IMR-90 (cell line): ENCODE measurements at regions of chr10 and their contacts with region 1.

Region 1: GRCh38 chr10:2938869-2939268 is 128.5 kb upstream of the PFKP start:
- DNase-seq: peak; percentile 21
- ATAC-seq: peak; percentile 29; the same call in 1 of the 2 replicates
- H3K4me3 ChIP-seq: no peak overlapping the region
- H3K27ac ChIP-seq: no peak overlapping the region
- H3K4me1 ChIP-seq: 0 out of 2 replicates have a peak, but pooled peaks cover 2% of the 10 kb centered on the region
- H3K27me3 ChIP-seq: peaks cover 15% of the 10 kb centered on the region
- CTCF ChIP-seq: peak; percentile 35
- POLR2A ChIP-seq: no peak
- RAD21 ChIP-seq: peak; percentile 41

Region 2: DNA sequence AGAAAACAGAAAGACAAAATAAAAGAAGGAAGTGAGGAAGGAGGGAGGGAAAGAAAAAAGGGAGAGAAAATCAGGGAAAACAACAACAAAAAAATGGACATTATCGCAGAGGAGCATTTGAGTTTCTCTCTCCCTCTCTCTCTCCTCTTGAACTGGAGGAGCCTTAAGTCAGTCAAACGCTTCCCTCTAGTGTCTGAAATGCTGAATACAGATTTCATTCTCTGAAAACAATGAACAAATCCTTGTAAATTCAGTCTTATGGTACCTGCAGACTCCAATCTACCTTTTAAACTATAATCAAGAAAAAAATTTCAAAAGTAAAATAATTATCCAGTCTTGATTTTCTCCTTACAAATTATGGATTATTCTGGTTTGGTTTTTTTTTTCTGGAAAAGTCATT is 39.2 kb after region 1 on chr10:
- CTCF ChIA-PET with region 1: interaction called, 3 read pairs
- POLR2A ChIA-PET with region 1: interaction called, 5 read pairs
- dilution Hi-C with region 1: no loop called
- in situ Hi-C with region 1: no loop called
- intact Hi-C with region 1: loop called (anchors 1 kb)
- DNase-seq: peak; percentile 79
- ATAC-seq: peak; percentile 62
- H3K4me3 ChIP-seq: no peak overlapping the region
- H3K27ac ChIP-seq: no peak overlapping the region
- H3K4me1 ChIP-seq: peaks cover 8% of the 10 kb centered on the region
- H3K27me3 ChIP-seq: no peaks in the 10 kb centered on the region
- CTCF ChIP-seq: peak; percentile 82
- POLR2A ChIP-seq: no peak
- RAD21 ChIP-seq: peak; percentile 83